ENCODE measurements at regions of chr9 and their contacts with region 1.

Region 1: DNA sequence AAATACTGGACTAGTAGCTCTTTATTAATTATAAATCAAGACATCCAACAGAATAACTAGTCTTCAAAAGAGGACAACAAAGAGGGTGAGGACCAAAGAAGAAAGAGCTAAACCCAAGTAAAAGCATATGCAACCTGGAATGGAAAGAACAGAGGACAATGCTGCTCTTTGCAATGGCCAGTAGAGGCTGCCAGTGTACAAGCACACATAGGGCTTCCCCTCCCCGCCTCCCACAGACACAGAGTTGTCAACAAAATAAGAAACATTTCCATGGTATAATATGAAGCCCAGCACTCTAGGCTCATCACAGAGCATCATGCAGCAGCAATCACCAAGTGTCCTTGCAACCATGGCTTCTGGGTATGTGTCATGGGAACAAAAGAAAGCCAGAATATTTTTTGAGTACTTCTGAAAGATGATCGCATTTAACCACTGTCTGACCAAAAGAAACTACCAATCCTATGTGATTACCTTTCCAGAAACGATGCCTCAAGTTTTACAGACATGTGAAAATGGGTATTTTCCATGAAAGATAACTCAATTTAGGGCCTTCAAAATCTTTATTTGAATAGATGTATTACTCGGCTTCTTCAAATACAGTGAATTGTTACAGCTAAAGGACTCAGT is 58.1 kb downstream of the RFX3 start:
- DNase-seq: peak; percentile 51

Region 2: DNA sequence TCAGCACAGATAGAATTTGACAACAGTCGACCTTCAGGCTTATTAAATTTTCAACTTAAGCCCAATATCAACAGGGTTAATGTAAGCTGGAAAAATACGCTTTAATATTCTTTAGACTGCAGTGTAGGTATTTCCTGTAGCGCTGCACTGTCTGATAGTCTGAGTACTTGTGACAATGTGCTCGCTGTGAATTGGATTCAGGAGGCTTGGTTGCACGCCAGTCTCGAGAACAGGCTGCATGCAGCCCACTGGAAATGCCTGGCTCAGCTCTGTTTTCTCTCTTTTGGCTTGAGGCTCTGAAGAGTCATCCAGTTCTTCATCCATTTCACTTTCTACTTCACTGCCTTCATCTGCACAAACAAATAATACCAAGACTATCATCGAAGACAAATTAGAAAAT is 242.8 kb before region 1 on chr9:
- in situ Hi-C with region 1: no loop called
- DNase-seq: no peak

Region 3: DNA sequence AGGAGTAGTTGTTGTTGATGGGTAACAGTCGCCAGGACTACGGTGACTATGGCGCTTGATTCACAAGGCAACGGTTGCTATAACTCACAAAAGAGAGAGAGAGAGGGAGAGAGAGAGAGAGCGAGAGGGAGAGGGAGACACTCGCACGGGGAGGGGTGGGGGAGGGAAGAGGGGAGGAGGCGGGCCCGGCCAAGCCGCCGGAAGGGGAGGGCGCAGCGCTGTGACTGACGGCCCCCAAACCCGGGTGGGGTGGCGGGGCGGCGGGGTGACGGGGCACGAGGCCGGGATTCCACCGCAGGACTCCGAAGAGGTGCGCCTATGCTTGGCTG is 58.1 kb after region 1 on chr9 and contains the start of gene RFX3:
- in situ Hi-C with region 1: no loop called
- DNase-seq: peak; percentile 87

Region 4: DNA sequence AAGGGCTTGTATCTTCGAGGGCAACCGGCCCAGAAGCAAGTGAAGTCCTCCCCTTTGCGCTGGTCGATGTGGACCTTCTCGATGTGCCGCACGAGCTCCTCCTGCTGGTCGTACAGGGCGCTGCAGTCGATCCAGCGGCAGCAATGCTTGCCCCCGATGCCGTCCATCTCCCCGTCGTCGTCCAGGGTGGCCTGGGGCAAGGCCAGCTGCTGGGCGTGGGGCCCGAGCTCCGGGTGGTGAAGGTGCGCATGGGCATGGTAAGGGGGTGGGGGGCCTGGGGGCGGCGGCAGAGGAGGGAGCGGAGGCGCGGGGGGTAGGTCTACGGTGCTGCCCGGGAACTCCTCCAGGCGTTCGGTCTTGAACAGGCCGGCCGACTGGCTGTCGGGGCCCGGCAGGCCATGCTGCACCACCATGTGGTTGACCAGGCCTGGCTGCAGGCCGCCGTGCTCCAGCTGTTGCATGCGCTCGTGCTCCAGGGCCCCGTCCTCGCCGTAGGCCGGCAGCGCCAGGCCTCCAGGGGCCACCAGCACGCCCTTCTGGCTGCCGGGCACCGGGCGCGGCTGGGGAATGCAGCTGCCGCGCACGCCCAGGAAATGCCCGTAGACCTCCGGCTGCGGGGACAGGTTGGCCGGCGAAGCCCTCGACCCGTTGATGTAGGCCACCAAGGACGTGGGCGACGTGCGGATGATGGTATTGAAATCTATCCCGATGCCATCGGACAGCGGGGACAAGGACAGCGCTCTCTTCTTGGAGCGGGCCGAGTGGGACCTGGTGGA is 650.3 kb after region 1 on chr9:
- in situ Hi-C with region 1: loop called (anchors 25 kb)
- DNase-seq: peak; percentile 48